HCT116 (cell line): ENCODE measurements at regions of chr4 and their contacts with region 1.

Region 1: GRCh38 chr4:18934197-18934596 is 912.6 kb upstream of the LCORL start:
- DNase-seq: no peak
- ATAC-seq: peak; percentile 58
- H3K4me3 ChIP-seq: no peak overlapping the region
- H3K27ac ChIP-seq: no peak overlapping the region
- H3K4me1 ChIP-seq: no peaks in the 10 kb centered on the region
- H3K27me3 ChIP-seq: no peaks in the 10 kb centered on the region
- CTCF ChIP-seq: 0 out of 6 replicates have a peak, but pooled peaks have one; percentile 1 to 28 (median 7)
- POLR2A ChIP-seq: no peak
- RAD21 ChIP-seq: peak; percentile 40; the same call in 1 of the 2 replicates

Region 2: GRCh38 chr4:18689308-18690115 is 244.7 kb before region 1 on chr4:
- CTCF ChIA-PET with region 1: no interaction called
- POLR2A ChIA-PET with region 1: no interaction called
- RAD21 ChIA-PET with region 1: no interaction called
- intact Hi-C with region 1: loop called (anchors 2 kb)
- DNase-seq: peak; percentile 44
- ATAC-seq: 0 out of 2 replicates have a peak, but pooled peaks have one; percentile 46
- H3K4me3 ChIP-seq: no peak overlapping the region
- H3K27ac ChIP-seq: no peak overlapping the region
- H3K4me1 ChIP-seq: no peaks in the 10 kb centered on the region
- H3K27me3 ChIP-seq: no peaks in the 10 kb centered on the region; the same call in 1 of the 2 replicates
- CTCF ChIP-seq: peak; percentile 59 to 87 (median 76)
- POLR2A ChIP-seq: no peak
- RAD21 ChIP-seq: peak; percentile 81

Region 3: GRCh38 chr4:18733961-18734360 is 200.2 kb before region 1 on chr4:
- CTCF ChIA-PET with region 1: no interaction called
- POLR2A ChIA-PET with region 1: no interaction called
- RAD21 ChIA-PET with region 1: no interaction called
- intact Hi-C with region 1: no loop called
- DNase-seq: no peak
- ATAC-seq: no peak
- H3K4me3 ChIP-seq: no peak overlapping the region
- H3K27ac ChIP-seq: no peak overlapping the region
- H3K4me1 ChIP-seq: no peaks in the 10 kb centered on the region
- H3K27me3 ChIP-seq: no peaks in the 10 kb centered on the region
- CTCF ChIP-seq: no peak
- POLR2A ChIP-seq: no peak
- RAD21 ChIP-seq: no peak